IMR-90 (cell line): ENCODE measurements at regions of chr2 and their contacts with region 1.

Region 1: GRCh38 chr2:177724398-177725287 is 332.1 kb downstream of the AGPS start:
- DNase-seq: peak; percentile 42
- ATAC-seq: peak; percentile 85
- H3K4me3 ChIP-seq: no peak overlapping the region
- H3K27ac ChIP-seq: no peak overlapping the region
- H3K4me1 ChIP-seq: no peaks in the 10 kb centered on the region
- H3K27me3 ChIP-seq: peaks cover 8% of the 10 kb centered on the region
- CTCF ChIP-seq: peak; percentile 82
- POLR2A ChIP-seq: no peak
- RAD21 ChIP-seq: peak; percentile 87

Region 2: GRCh38 chr2:177419274-177419673 is 305.4 kb before region 1 on chr2:
- CTCF ChIA-PET with region 1: no interaction called
- POLR2A ChIA-PET with region 1: no interaction called
- dilution Hi-C with region 1: no loop called
- in situ Hi-C with region 1: no loop called
- intact Hi-C with region 1: loop called (anchors 5 kb)
- DNase-seq: peak; percentile 61
- ATAC-seq: no peak
- H3K4me3 ChIP-seq: no peak overlapping the region
- H3K27ac ChIP-seq: no peak overlapping the region
- H3K4me1 ChIP-seq: no peaks in the 10 kb centered on the region
- H3K27me3 ChIP-seq: no peaks in the 10 kb centered on the region
- CTCF ChIP-seq: no peak
- POLR2A ChIP-seq: no peak
- RAD21 ChIP-seq: no peak

Region 3: GRCh38 chr2:177489719-177490301 is 234.8 kb before region 1 on chr2:
- CTCF ChIA-PET with region 1: no interaction called
- POLR2A ChIA-PET with region 1: no interaction called
- dilution Hi-C with region 1: no loop called
- in situ Hi-C with region 1: no loop called
- intact Hi-C with region 1: loop called (anchors 1 kb)
- DNase-seq: peak; percentile 49
- ATAC-seq: peak; percentile 72
- H3K4me3 ChIP-seq: no peak overlapping the region
- H3K27ac ChIP-seq: no peak overlapping the region
- H3K4me1 ChIP-seq: no peaks in the 10 kb centered on the region
- H3K27me3 ChIP-seq: no peaks in the 10 kb centered on the region
- CTCF ChIP-seq: peak; percentile 67
- POLR2A ChIP-seq: no peak
- RAD21 ChIP-seq: peak; percentile 63